OCI-LY7 (cell line): ENCODE measurements at regions of chr3 and their contacts with region 1.

Region 1: DNA sequence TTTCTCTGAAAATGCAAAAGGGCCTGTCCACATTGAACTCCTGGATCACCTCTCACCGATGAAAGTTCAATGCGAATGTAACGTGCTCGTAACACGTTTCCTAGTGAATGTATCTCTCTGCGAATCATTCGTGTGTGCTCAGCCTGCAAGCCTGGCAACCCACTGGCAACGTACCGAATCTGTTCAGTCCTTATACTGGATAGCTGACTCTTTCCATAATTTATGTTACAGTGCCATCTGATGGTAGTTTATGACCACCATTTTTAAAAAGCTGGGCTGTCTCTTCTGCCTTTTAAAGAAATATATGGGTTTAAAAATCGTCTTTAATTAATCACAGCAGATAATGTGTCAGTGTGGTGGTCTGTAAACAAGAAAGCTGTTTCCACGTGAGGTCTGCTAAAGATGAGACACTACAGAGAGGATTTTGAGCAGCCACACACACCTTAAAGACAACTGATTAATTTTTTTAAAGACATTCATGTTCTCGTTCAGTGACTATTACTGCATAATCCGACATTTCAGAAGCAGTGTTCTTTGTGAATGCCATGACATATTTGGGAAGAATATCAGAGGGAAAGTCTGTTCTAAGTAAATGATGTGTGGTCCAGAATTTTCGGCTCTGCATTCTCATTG is 69.4 kb upstream of the FOXP1 start:
- DNase-seq: peak; percentile 71
- H3K4me3 ChIP-seq: no peak overlapping the region
- H3K27ac ChIP-seq: no peak overlapping the region
- H3K4me1 ChIP-seq: peaks cover 18% of the 10 kb centered on the region
- CTCF ChIP-seq: peak; percentile 92

Region 2: GRCh38 chr3:70072180-70072579 is 1580.7 kb before region 1 on chr3:
- CTCF ChIA-PET with region 1: no interaction called
- POLR2A ChIA-PET with region 1: no interaction called
- intact Hi-C with region 1: loop called (anchors 5 kb)
- DNase-seq: no peak
- H3K4me3 ChIP-seq: no peak overlapping the region
- H3K27ac ChIP-seq: no peak overlapping the region
- H3K4me1 ChIP-seq: no peaks in the 10 kb centered on the region
- CTCF ChIP-seq: no peak

Region 3: DNA sequence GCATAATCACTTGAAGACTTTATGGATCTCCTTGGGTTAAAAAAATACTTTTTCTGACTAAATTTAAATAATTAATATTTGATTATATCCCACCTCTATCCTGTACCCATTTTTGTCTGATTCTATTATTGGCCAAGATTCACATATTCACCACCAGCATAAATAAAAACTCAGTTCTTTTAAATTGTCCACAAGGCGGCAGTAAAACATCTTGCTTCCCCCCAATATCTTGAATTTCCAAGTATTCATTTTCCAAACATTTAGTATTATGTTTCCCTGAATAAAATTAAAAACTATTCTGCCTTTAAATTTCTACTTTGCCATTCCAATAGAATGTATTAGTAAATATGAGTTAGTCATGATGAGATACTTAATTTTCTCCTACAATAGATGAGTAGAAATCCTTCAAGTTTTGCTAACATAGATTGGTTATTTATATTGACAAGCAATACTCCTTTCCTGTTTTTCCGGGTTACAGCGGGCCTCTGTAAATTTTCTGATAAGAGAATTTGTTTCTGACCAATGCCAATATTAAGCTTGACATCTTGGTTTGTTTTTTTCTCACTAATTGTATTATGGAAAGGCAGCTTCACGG is 1121.7 kb before region 1 on chr3:
- CTCF ChIA-PET with region 1: no interaction called
- POLR2A ChIA-PET with region 1: no interaction called
- intact Hi-C with region 1: loop called (anchors 5 kb)
- DNase-seq: peak; percentile 14
- H3K4me3 ChIP-seq: no peak overlapping the region
- H3K27ac ChIP-seq: no peak overlapping the region
- H3K4me1 ChIP-seq: no peaks in the 10 kb centered on the region
- CTCF ChIP-seq: peak; percentile 88

Region 4: GRCh38 chr3:70550723-70551319 is 1102.1 kb before region 1 on chr3:
- CTCF ChIA-PET with region 1: no interaction called
- POLR2A ChIA-PET with region 1: no interaction called
- intact Hi-C with region 1: loop called (anchors 1 kb)
- DNase-seq: peak; percentile 57
- H3K4me3 ChIP-seq: no peak overlapping the region
- H3K27ac ChIP-seq: no peak overlapping the region
- H3K4me1 ChIP-seq: no peaks in the 10 kb centered on the region
- CTCF ChIP-seq: peak; percentile 81

Region 5: DNA sequence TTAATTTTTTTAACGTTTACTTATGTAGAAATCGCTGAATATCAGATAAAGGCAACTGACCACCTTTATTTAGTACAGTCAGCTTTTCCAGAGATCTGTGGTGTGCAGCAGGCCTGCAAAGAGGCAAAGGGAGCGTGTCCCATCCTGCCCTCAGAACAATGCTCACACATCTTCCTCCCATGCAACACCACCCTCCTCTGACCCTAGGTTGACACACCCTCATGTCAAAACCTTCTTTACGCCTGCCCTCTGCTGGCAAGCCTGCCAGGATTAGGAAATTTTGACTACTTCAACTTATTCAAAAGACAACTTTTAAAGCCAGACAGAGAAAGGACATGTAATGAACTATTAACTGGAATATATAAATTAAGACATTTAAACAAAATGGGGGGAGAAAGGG is 583.1 kb before region 1 on chr3:
- CTCF ChIA-PET with region 1: no interaction called
- POLR2A ChIA-PET with region 1: no interaction called
- intact Hi-C with region 1: loop called (anchors 5 kb)
- DNase-seq: peak; percentile 76
- H3K4me3 ChIP-seq: no peak overlapping the region
- H3K27ac ChIP-seq: no peak overlapping the region
- H3K4me1 ChIP-seq: peaks cover 47% of the 10 kb centered on the region
- CTCF ChIP-seq: peak; percentile 88

Region 6: DNA sequence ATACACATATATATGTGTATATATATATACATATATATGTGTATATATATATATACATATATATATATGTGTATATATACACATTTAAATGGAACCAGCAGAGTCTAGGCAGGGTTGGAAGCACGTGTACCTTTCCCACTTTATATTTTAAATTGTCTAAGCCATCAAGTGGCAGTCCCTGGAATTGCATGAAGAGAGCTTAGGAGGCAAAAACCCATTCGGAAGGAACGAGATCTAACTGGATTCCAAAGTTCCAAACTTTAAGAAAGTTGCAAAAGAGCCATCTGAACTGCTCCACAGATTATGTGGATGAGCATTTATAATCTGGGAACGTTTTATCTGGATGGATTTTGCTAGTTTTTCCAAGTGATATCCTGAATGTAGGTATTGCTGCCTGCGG is 255.9 kb before region 1 on chr3:
- CTCF ChIA-PET with region 1: no interaction called
- POLR2A ChIA-PET with region 1: no interaction called
- intact Hi-C with region 1: loop called (anchors 10 kb)
- DNase-seq: peak; percentile 42
- H3K4me3 ChIP-seq: no peak overlapping the region
- H3K27ac ChIP-seq: no peak overlapping the region
- H3K4me1 ChIP-seq: peaks cover 66% of the 10 kb centered on the region
- CTCF ChIP-seq: peak; percentile 69

Region 7: DNA sequence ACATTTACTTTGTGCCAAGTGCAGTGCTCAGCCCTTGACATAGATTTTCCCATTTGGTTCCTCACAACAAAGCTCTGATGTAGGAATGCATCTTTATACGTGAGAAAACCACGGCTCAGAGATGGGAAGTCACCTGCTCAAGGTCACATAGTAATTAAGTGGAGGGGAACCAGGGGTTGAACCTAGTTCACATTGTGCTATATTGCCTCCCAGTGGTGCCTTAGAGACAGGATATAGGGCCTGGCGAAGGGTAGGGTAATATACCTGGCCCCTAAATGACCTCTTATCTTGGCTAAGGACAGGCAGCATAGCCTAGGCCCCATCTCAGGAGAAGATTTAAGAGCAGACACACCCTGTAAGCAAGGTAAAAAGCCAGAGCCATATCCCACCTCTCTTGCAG is 140.9 kb before region 1 on chr3:
- CTCF ChIA-PET with region 1: no interaction called
- POLR2A ChIA-PET with region 1: interaction called, 3 read pairs
- intact Hi-C with region 1: loop called (anchors 10 kb)
- DNase-seq: peak; percentile 77
- H3K4me3 ChIP-seq: no peak overlapping the region
- H3K27ac ChIP-seq: peak overlapping the region; percentile 14
- H3K4me1 ChIP-seq: peaks cover 38% of the 10 kb centered on the region
- CTCF ChIP-seq: peak; percentile 83